ENCODE measurements at regions of chr16 and their contacts with region 1.

Region 1: DNA sequence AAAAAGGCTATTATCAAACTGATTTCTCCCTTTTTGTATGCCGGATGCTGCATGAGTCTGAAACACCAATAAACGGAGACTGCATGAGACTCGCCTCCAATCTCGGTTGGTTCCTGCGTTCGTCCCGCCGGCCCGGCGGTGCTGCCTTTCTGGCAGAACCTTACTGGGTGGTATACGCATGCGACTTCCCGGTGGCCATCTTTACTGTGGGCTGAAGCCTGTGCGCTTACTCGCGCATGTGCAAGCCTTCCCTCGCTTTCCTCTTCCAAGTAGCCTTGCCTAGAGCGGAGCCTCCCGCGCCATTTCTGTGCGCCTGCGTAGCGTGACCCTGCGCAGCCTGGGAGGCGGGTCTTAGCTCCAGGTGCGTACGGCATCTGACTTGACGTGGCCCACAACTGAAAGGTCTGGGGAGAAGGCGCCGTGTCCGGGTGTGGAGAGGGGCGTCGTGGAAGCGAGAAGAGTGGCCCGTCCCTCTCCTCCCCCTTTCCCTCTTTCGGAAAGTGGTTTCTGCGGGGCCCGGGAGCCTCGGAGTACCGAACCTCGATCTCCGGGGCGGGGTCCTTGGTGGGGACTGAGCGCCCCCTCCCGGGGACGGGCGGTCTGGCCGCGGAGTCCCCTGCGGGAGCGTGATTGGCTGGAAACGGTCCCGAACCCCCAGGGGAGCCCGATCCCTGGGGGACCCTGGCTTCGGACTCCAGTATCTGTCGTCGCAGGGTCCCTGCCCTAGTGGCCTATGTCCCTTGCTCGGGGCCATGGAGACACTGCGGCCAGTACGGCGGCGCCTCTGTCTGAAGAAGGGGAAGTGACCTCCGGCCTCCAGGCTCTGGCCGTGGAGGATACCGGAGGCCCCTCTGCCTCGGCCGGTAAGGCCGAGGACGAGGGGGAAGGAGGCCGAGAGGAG is at the start of gene PAGR1:
- DNase-seq: peak; percentile 100
- ATAC-seq: peak; percentile 75
- H3K4me3 ChIP-seq: peak within 1 kb of the TSS; percentile 99
- H3K27ac ChIP-seq: peak within 1 kb of the TSS; percentile 90
- H3K4me1 ChIP-seq: peaks cover 20% of the 10 kb centered on the region
- H3K27me3 ChIP-seq: no peaks in the 10 kb centered on the region
- CTCF ChIP-seq: peak; percentile 91 to 98 (median 94)
- EP300 ChIP-seq: peak in 1 of 2 experiments; percentile 11; a peak in 1 of 4 replicates
- POLR2A ChIP-seq: peak; percentile 95
- RAD21 ChIP-seq: peak; percentile 67
- polyA plus RNA-seq, gene PAGR1: 1.1 to 5.5 TPM

Region 2: GRCh38 chr16:29729116-29729521 is 86.9 kb before region 1 on chr16:
- CTCF ChIA-PET with region 1: interaction called, 23 read pairs
- POLR2A ChIA-PET with region 1: interaction called, 3 read pairs
- RAD21 ChIA-PET with region 1: interaction called, 5 read pairs
- SMC1A ChIA-PET with region 1: interaction called, 4 read pairs
- in situ Hi-C with region 1: no loop called
- intact Hi-C with region 1: no loop called
- DNase-seq: no peak
- ATAC-seq: no peak
- H3K4me3 ChIP-seq: no peak overlapping the region
- H3K27ac ChIP-seq: no peak overlapping the region
- H3K4me1 ChIP-seq: peaks cover 17% of the 10 kb centered on the region
- H3K27me3 ChIP-seq: no peaks in the 10 kb centered on the region
- CTCF ChIP-seq: peak; percentile 44 to 56 (median 54); a peak in 5 of 6 replicates
- EP300 ChIP-seq: no peak
- POLR2A ChIP-seq: no peak
- RAD21 ChIP-seq: peak; percentile 36

Region 3: GRCh38 chr16:29805378-29806098 is 10.5 kb before region 1 on chr16:
- CTCF ChIA-PET with region 1: interaction called, 17 read pairs
- POLR2A ChIA-PET with region 1: interaction called, 40 read pairs
- RAD21 ChIA-PET with region 1: interaction called, 24 read pairs
- SMC1A ChIA-PET with region 1: interaction called, 8 read pairs
- in situ Hi-C with region 1: no loop called
- intact Hi-C with region 1: loop called (anchors 1 kb)
- DNase-seq: peak; percentile 76
- ATAC-seq: peak; percentile 78
- H3K4me3 ChIP-seq: peak overlapping the region; percentile 73
- H3K27ac ChIP-seq: peak overlapping the region; percentile 91
- H3K4me1 ChIP-seq: peaks cover 23% of the 10 kb centered on the region
- H3K27me3 ChIP-seq: no peaks in the 10 kb centered on the region
- CTCF ChIP-seq: 0 out of 6 replicates have a peak, but pooled peaks of 1 of the 3 experiments have one; percentile 0
- EP300 ChIP-seq: peak; percentile 46 to 79; a peak in 2 of 4 replicates
- POLR2A ChIP-seq: peak; percentile 95
- RAD21 ChIP-seq: no peak

Region 4: GRCh38 chr16:29862884-29863668 is 47.0 kb after region 1 on chr16 and contains the start of gene CDIPT:
- CTCF ChIA-PET with region 1: no interaction called
- POLR2A ChIA-PET with region 1: interaction called, 6 read pairs
- RAD21 ChIA-PET with region 1: no interaction called
- SMC1A ChIA-PET with region 1: interaction called, 3 read pairs
- in situ Hi-C with region 1: no loop called
- intact Hi-C with region 1: loop called (anchors 5 kb)
- DNase-seq: peak; percentile 92
- ATAC-seq: peak; percentile 99
- H3K4me3 ChIP-seq: peak within 1 kb of the TSS; percentile 92
- H3K27ac ChIP-seq: peak within 1 kb of the TSS; percentile 95
- H3K4me1 ChIP-seq: peaks cover 4% of the 10 kb centered on the region
- H3K27me3 ChIP-seq: 0 out of 4 replicates have a peak, but pooled peaks cover 0 to 1% of the 10 kb centered on the region in 2 experiments
- CTCF ChIP-seq: peak; percentile 83 to 96 (median 84)
- EP300 ChIP-seq: no peak
- POLR2A ChIP-seq: peak; percentile 59; the same call in 1 of the 2 replicates
- RAD21 ChIP-seq: no peak
- polyA plus RNA-seq, gene CDIPT: 0.87 to 3.5 TPM

Region 5: DNA sequence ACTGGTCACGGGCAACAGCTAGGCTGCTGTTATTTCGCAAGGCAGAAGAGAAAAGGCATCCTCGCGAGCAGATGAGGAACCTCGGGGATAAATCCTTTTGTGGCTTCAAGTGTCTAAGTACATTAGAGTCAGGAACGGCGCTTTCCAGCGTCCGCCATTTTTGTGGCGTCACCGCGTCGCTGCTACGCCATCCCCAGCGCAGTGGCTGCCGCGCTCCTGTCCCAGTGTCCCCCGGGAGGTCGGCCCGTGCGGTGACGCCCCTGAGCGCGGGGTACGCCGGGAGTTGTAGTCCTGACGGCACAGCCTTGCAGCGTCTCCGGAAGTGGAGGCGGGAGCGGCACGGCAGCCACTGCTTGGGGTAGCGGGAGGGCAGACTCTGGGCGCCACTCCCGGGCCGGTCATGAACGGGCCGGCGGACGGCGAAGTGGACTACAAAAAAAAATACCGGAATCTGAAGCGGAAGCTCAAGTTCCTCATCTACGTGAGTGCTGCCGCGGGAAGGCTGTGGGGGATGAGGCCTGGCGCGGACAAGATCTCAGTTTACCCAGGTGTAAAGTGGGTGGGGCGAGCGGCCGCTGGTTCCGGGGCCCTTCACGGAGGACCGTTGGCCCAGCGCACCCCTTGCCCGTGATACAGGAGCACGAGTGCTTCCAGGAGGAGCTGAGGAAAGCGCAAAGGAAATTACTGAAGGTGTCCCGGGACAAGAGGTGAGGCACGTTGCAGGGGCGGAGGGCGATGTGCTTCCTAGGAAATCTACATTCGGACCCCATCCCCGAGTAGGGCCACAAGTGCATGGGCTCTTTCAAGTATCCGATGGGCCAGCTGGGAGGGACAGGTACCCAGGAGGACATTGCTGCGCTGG is 180.1 kb after region 1 on chr16 and contains the start of gene INO80E:
- CTCF ChIA-PET with region 1: interaction called, 3 read pairs
- POLR2A ChIA-PET with region 1: no interaction called
- RAD21 ChIA-PET with region 1: no interaction called
- SMC1A ChIA-PET with region 1: interaction called, 3 read pairs
- in situ Hi-C with region 1: no loop called
- intact Hi-C with region 1: loop called (anchors 2 kb)
- DNase-seq: peak; percentile 88
- ATAC-seq: peak; percentile 96
- H3K4me3 ChIP-seq: peak within 1 kb of the TSS; percentile 81
- H3K27ac ChIP-seq: peak within 1 kb of the TSS; percentile 91
- H3K4me1 ChIP-seq: peaks cover 9% of the 10 kb centered on the region
- H3K27me3 ChIP-seq: no peaks in the 10 kb centered on the region
- CTCF ChIP-seq: no peak
- EP300 ChIP-seq: 0 out of 4 replicates have a peak, but pooled peaks of 1 of the 2 experiments have one; percentile 6
- POLR2A ChIP-seq: peak; percentile 86
- RAD21 ChIP-seq: no peak
- polyA plus RNA-seq, gene INO80E: 0.39 to 0.90 TPM

Measured in GM12878 (cell line).